Caco-2 (cell line): ENCODE measurements at regions of chrX and their contacts with region 1.

Region 1: DNA sequence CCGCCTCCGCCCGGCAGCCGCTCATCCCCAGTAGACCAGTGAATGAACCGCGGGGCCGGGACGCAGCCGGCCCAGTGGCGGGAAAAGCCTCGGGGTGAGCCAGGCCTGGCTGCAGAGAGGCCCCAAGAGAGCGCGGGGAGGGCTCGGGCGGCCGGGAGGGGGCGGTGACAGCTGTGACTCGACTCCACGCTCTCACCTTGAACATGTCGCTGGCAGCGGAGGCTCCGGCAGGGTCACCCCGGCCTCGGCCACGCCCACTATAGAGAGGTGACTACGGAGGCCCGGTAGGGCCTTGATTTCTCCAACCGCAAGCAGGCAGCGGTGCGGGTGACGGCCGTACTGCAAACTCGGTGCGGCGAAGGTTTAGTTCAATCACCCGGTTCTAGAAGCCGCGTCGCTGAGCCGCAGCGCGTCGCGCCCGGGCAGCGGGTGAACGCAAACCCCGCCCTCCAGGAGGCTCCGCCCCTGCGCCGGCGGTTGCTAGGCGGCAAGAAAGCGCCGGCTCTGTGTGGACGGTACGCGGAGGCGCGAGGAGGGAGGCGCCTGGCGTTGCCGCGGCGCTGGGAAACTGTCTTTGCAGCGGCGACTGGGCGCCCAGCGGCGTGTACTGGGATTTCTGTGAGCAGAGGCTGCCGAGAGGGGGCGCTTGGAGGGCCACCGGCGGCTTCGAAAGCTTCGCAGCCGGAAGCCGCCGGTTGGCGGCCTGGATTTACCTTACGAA is at the starts of genes APOO and CXorf58:
- DNase-seq: peak; percentile 91 to 92
- H3K4me3 ChIP-seq: peak within 1 kb of the TSS; percentile 39
- H3K4me3 Mint-ChIP-seq: peak within 1 kb of the TSS; percentile 72
- H3K27ac Mint-ChIP-seq: peak within 1 kb of the TSS; percentile 61
- H3K4me1 ChIP-seq: no peaks in the 10 kb centered on the region
- H3K4me1 Mint-ChIP-seq: peaks cover 8% of the 10 kb centered on the region
- H3K27me3 ChIP-seq: no peaks in the 10 kb centered on the region
- H3K27me3 Mint-ChIP-seq: no peaks in the 10 kb centered on the region
- CTCF ChIP-seq: peak; percentile 49 to 89
- total RNA-seq, gene APOO: 23.4 and 24.0 TPM in 2 replicates
- total RNA-seq, gene CXorf58: not detected in 2 replicates

Region 2: DNA sequence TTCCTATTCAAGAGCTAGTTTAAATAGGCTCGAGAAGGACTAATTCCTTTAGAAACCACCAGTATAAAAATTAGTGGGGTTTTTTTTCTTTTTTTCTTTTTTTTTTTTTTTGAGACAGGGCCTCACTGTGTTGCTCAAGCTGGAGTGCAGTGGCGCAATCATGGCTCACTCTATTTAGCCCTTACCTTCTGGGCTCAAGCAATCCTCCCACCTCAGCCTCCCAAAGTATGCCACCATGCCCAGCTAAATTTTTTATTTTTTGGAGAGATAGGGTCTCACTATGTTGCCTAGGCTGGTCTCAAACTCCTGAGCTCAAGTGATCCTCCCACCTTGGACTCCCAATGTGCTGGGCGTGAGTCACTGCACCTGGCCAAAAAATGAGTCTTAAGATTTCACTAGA is 52.7 kb before region 1 on chrX:
- CTCF ChIA-PET with region 1: no interaction called
- POLR2A ChIA-PET with region 1: interaction called, 10 read pairs
- intact Hi-C with region 1: no loop called
- DNase-seq: no peak
- H3K4me3 ChIP-seq: no peak overlapping the region
- H3K4me3 Mint-ChIP-seq: no peak overlapping the region
- H3K27ac Mint-ChIP-seq: no peak overlapping the region
- H3K4me1 ChIP-seq: peaks cover 5% of the 10 kb centered on the region; the same call in 1 of the 2 replicates
- H3K4me1 Mint-ChIP-seq: no peaks in the 10 kb centered on the region
- H3K27me3 ChIP-seq: no peaks in the 10 kb centered on the region
- H3K27me3 Mint-ChIP-seq: no peaks in the 10 kb centered on the region
- CTCF ChIP-seq: no peak

Region 3: GRCh38 chrX:24024819-24025740 is 117.4 kb after region 1 on chrX:
- CTCF ChIA-PET with region 1: no interaction called
- POLR2A ChIA-PET with region 1: interaction called, 3 read pairs
- intact Hi-C with region 1: loop called (anchors 1 kb)
- DNase-seq: peak; percentile 90
- H3K4me3 ChIP-seq: peak overlapping the region; percentile 90
- H3K4me3 Mint-ChIP-seq: peak overlapping the region; percentile 80
- H3K27ac Mint-ChIP-seq: peak overlapping the region; percentile 93
- H3K4me1 ChIP-seq: no peaks in the 10 kb centered on the region
- H3K4me1 Mint-ChIP-seq: no peaks in the 10 kb centered on the region
- H3K27me3 ChIP-seq: no peaks in the 10 kb centered on the region
- H3K27me3 Mint-ChIP-seq: no peaks in the 10 kb centered on the region
- CTCF ChIP-seq: no peak

Region 4: GRCh38 chrX:24054182-24055042 is 146.8 kb after region 1 on chrX and contains the start of gene EIF2S3:
- CTCF ChIA-PET with region 1: interaction called, 9 read pairs
- POLR2A ChIA-PET with region 1: no interaction called
- intact Hi-C with region 1: loop called (anchors 1 kb)
- DNase-seq: peak; percentile 89 to 91
- H3K4me3 ChIP-seq: peak within 1 kb of the TSS; percentile 28
- H3K4me3 Mint-ChIP-seq: no peak within 1 kb of the TSS
- H3K27ac Mint-ChIP-seq: no peak within 1 kb of the TSS
- H3K4me1 ChIP-seq: no peaks in the 10 kb centered on the region
- H3K4me1 Mint-ChIP-seq: no peaks in the 10 kb centered on the region
- H3K27me3 ChIP-seq: no peaks in the 10 kb centered on the region
- H3K27me3 Mint-ChIP-seq: no peaks in the 10 kb centered on the region
- CTCF ChIP-seq: peak; percentile 58 to 73
- total RNA-seq, gene EIF2S3: 240 and 270 TPM in 2 replicates